ENCODE measurements at regions of chr3 and their contacts with region 1.

Region 1: GRCh38 chr3:18740631-18741583 is 315.8 kb upstream of the SATB1 start:
- DNase-seq: peak; percentile 61
- ATAC-seq: peak; percentile 87
- H3K4me3 ChIP-seq: peak overlapping the region; percentile 33; the same call in 1 of the 2 replicates
- H3K27ac ChIP-seq: peak overlapping the region; percentile 53
- H3K4me1 ChIP-seq: peaks cover 17% of the 10 kb centered on the region
- H3K27me3 ChIP-seq: no peaks in the 10 kb centered on the region; a peak in 1 of 4 replicates
- CTCF ChIP-seq: no peak
- EP300 ChIP-seq: peak; percentile 40 to 94; a peak in 3 of 4 replicates
- POLR2A ChIP-seq: no peak
- RAD21 ChIP-seq: no peak

Region 2: DNA sequence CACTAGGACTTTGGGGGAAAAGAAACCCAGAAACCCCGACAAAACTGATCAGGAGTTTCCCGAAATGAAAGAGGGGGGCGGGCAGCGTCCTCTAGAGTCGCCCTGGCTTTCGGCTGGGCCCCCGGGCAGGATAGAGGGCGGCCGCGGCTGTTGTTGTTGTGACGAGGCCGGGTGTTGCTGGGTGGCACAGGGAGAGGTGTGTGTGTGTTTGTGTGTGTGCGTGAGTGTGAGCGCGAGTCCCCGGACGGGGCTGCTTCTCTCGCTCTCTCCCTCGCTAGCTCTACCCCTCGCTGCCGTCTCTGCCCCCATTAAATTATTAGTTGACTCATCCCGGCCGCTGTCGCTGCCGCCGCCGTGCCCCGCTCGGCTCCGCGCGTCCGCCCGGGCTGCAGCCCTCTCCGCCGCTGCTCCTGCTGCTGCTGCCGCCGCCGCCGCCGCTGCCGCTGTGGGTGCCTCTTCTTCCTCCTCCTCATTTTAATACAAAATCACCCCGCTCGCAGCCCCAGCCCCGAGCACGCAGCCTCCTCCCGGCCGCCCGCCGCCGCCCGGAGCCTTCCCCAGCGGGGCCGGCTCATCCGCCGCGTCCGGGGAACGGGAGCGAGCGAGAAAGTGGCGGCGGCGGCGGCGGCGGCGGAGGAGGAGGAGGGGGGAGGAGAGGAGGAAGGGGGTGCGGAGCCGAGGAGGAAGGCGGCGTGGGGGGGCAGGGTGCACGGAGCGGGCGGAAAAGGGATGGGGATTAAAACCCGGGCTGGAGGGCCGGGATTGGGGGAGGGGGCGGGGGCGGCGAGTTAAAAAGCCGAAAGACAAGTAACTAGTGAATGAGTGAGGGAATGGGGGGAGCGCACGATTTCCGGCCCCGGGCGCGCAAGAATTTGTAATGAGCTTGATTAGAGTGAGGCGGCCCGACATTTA is 315.9 kb before region 1 on chr3 and contains the start of gene SATB1:
- CTCF ChIA-PET with region 1: no interaction called
- POLR2A ChIA-PET with region 1: no interaction called
- RAD21 ChIA-PET with region 1: no interaction called
- SMC1A ChIA-PET with region 1: no interaction called
- in situ Hi-C with region 1: no loop called
- intact Hi-C with region 1: loop called (anchors 10 kb)
- DNase-seq: no peak
- ATAC-seq: peak; percentile 75
- H3K4me3 ChIP-seq: peak within 1 kb of the TSS; percentile 76
- H3K27ac ChIP-seq: no peak within 1 kb of the TSS
- H3K4me1 ChIP-seq: peaks cover 9% of the 10 kb centered on the region; the same call in 1 of the 2 replicates
- H3K27me3 ChIP-seq: peaks cover 7 to 20% of the 10 kb centered on the region in 2 experiments
- CTCF ChIP-seq: no peak
- EP300 ChIP-seq: no peak
- POLR2A ChIP-seq: no peak
- RAD21 ChIP-seq: no peak
- polyA plus RNA-seq, gene SATB1: 0.02 TPM in 1 of 2 experiments, not detected in the other

Region 3: GRCh38 chr3:18730491-18730890 is 10.4 kb before region 1 on chr3:
- CTCF ChIA-PET with region 1: no interaction called
- POLR2A ChIA-PET with region 1: no interaction called
- RAD21 ChIA-PET with region 1: no interaction called
- SMC1A ChIA-PET with region 1: no interaction called
- in situ Hi-C with region 1: no loop called
- intact Hi-C with region 1: no loop called
- DNase-seq: no peak
- ATAC-seq: no peak
- H3K4me3 ChIP-seq: no peak overlapping the region
- H3K27ac ChIP-seq: no peak overlapping the region
- H3K4me1 ChIP-seq: no peaks in the 10 kb centered on the region
- H3K27me3 ChIP-seq: no peaks in the 10 kb centered on the region; a peak in 1 of 4 replicates
- CTCF ChIP-seq: no peak
- EP300 ChIP-seq: no peak
- POLR2A ChIP-seq: no peak
- RAD21 ChIP-seq: no peak

Measured in GM12878 (cell line).